ENCODE measurements at regions of chr2 and their contacts with region 1.

Region 1: GRCh38 chr2:71545572-71546274 is 92.4 kb downstream of the DYSF start:
- DNase-seq: peak in 1 of 2 donors; percentile 90
- H3K4me3 ChIP-seq: no peak overlapping the region
- H3K27ac ChIP-seq: peak overlapping the region in 2 of 5 donors; percentile 13 to 38
- H3K4me1 ChIP-seq: peaks cover 0 to 14% (median 2%) of the 10 kb centered on the region in 4 donors
- H3K27me3 ChIP-seq: peaks cover 0 to 24% (median 0%) of the 10 kb centered on the region in 3 donors
- CTCF ChIP-seq: peak in 4 of 7 experiments; percentile 15 to 50 (median 46)
- EP300 ChIP-seq: no peak
- POLR2A ChIP-seq: no peak

Region 2: DNA sequence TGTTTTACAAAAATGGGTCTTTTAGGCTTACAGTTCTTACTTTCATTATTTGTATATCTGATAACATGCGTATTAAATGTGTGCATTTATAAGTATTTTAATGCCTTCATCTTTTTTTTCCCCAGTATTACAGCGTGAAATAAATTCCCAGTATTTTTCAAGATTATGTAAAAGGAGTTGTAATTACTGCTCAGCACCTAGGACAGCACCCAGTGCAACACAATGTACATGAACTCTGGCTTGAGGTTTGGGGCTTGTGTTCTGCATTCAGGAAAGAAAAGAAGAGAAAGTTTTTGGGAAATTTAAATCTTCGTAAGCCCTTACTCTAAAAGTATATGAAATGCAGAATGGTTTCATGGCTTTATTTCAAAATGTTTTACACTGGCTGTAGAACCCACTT is 197.4 kb before region 1 on chr2:
- intact Hi-C with region 1: no loop called
- DNase-seq: peak in 1 of 2 donors; percentile 73
- H3K4me3 ChIP-seq: no peak overlapping the region
- H3K27ac ChIP-seq: no peak overlapping the region
- H3K4me1 ChIP-seq: peaks cover 0 to 35% (median 14%) of the 10 kb centered on the region in 4 donors
- H3K27me3 ChIP-seq: no peaks in the 10 kb centered on the region
- CTCF ChIP-seq: no peak
- EP300 ChIP-seq: no peak
- POLR2A ChIP-seq: no peak

Region 3: GRCh38 chr2:71784734-71785473 is 239.2 kb after region 1 on chr2:
- intact Hi-C with region 1: no loop called
- DNase-seq: no peak
- H3K4me3 ChIP-seq: no peak overlapping the region
- H3K27ac ChIP-seq: no peak overlapping the region
- H3K4me1 ChIP-seq: peaks cover 0 to 12% (median 0%) of the 10 kb centered on the region in 4 donors
- H3K27me3 ChIP-seq: peaks cover 0 to 15% (median 0%) of the 10 kb centered on the region in 3 donors
- CTCF ChIP-seq: no peak
- EP300 ChIP-seq: no peak
- POLR2A ChIP-seq: no peak

Region 4: GRCh38 chr2:72104821-72105588 is 559.3 kb after region 1 on chr2:
- intact Hi-C with region 1: no loop called
- DNase-seq: no peak
- H3K4me3 ChIP-seq: no peak overlapping the region
- H3K27ac ChIP-seq: no peak overlapping the region
- H3K4me1 ChIP-seq: no peaks in the 10 kb centered on the region
- H3K27me3 ChIP-seq: peaks cover 0 to 14% (median 0%) of the 10 kb centered on the region in 3 donors
- CTCF ChIP-seq: no peak
- EP300 ChIP-seq: no peak
- POLR2A ChIP-seq: no peak

Region 5: DNA sequence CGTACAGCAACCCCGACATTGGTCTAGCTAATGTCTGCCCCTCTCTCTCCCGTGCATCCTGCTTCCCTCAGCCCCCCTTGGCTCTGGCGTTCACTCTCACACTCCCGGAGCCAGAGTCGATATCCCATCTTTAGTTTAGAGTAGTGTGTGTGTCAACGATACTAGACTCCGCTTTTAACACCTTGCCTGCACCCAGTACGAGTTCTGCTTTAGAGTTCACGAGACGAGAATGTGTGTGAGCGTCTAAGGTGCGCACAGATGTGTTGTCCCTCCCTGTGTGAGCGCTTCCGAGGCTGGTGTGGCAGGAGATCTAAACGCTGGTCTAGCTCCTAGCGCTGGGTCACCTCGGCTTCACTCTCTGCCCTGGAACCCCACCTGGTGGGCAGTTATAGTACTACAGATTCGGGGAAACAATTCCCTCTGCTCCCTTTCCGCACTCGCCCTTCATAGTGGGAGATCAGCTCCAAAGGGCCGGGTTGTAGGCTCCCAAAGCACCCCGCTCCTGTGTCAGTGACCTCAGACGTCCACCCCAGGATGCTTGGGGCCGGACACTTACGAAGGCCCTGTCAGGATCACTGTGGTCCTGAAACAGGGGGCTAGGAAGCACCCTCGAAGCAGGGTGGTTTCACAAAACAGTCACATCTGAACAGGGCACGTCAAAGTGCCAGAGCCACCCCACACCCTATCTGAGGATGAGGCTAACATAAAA is 604.6 kb after region 1 on chr2:
- intact Hi-C with region 1: loop called (anchors 5 kb)
- DNase-seq: peak; percentile 80 to 92
- H3K4me3 ChIP-seq: peak overlapping the region; percentile 48 to 60 (median 54)
- H3K27ac ChIP-seq: no peak overlapping the region
- H3K4me1 ChIP-seq: peaks cover 39 to 52% (median 50%) of the 10 kb centered on the region in 4 donors
- H3K27me3 ChIP-seq: peaks cover 26 to 96% (median 60%) of the 10 kb centered on the region in 3 donors
- CTCF ChIP-seq: peak in 6 of 7 experiments; percentile 62 to 92 (median 83)
- EP300 ChIP-seq: no peak
- POLR2A ChIP-seq: no peak

Measured in stomach (tissue), 19 donors.